PC-3 (cell line): ENCODE measurements at regions of chr4 and their contacts with region 1.

Region 1: GRCh38 chr4:7929118-7929951 is 10.3 kb downstream of the AFAP1 start:
- DNase-seq: peak; percentile 79
- ATAC-seq: peak; percentile 92
- H3K4me3 ChIP-seq: 0 out of 2 replicates have a peak overlapping the region, but pooled peaks have one; percentile 5
- H3K27ac ChIP-seq: peak overlapping the region; percentile 15
- H3K4me1 ChIP-seq: peaks cover 31% of the 10 kb centered on the region
- H3K27me3 ChIP-seq: no peaks in the 10 kb centered on the region
- CTCF ChIP-seq: peak; percentile 57

Region 2: DNA sequence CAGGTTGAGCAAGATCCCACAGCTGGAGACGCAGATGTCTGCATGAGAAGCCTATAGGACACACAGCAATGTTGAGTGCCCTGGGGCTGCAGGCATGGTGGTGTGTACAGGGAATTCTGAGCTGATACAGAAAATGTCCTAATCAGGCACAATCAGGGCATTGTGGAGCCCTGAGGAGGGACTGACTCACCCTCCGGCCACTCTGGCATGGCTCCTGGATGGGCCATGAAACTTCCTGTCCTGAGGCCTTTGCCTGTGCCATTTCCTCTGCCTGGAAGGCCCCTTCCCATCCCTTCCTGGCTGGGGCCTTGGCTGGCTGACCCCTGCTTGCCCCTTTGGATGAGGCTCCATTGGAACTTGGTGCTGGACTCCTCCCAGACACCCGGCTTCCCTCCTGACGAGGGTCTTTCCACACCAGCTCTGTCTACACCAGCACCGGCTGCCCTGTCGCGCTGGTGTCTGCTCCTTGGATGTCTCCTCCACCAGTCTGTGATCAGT is 27.0 kb after region 1 on chr4:
- CTCF ChIA-PET with region 1: interaction called, 3 read pairs
- POLR2A ChIA-PET with region 1: interaction called, 13 read pairs
- intact Hi-C with region 1: no loop called
- DNase-seq: peak; percentile 86
- ATAC-seq: peak; percentile 88
- H3K4me3 ChIP-seq: no peak overlapping the region
- H3K27ac ChIP-seq: peak overlapping the region; percentile 88
- H3K4me1 ChIP-seq: peaks cover 38% of the 10 kb centered on the region
- H3K27me3 ChIP-seq: no peaks in the 10 kb centered on the region
- CTCF ChIP-seq: no peak